Naive thymus-derived CD4-positive, alpha-beta T cell (primary cell): ENCODE measurements at regions of chr11 and their contacts with region 1.

Region 1: GRCh38 chr11:130002846-130003716 is 446 bp upstream of the PRDM10 start:
- DNase-seq: peak; percentile 75 to 97 (median 94)
- ATAC-seq: peak; percentile 85
- H3K4me3 ChIP-seq: peak overlapping the region; percentile 76
- H3K4me3 Mint-ChIP-seq: peak overlapping the region; percentile 87 to 100 (median 99)
- H3K27ac ChIP-seq: peak overlapping the region; percentile 98
- H3K27ac Mint-ChIP-seq: peak overlapping the region; percentile 99 to 100 (median 100)
- H3K4me1 ChIP-seq: peaks cover 16 to 22% of the 10 kb centered on the region in 2 donors
- H3K4me1 Mint-ChIP-seq: peaks cover 21 to 48% (median 43%) of the 10 kb centered on the region in 7 donors
- H3K27me3 ChIP-seq: no peaks in the 10 kb centered on the region
- H3K27me3 Mint-ChIP-seq: peaks cover 0 to 8% (median 0%) of the 10 kb centered on the region in 5 donors

Region 2: GRCh38 chr11:129815596-129816461 is 187.3 kb before region 1 on chr11 and contains the start of gene TMEM45B:
- CTCF ChIA-PET with region 1: no interaction called
- POLR2A ChIA-PET with region 1: interaction called, 6 read pairs
- intact Hi-C with region 1: loop called (anchors 1 to 5 kb)
- DNase-seq: peak; percentile 27 to 57 (median 45)
- ATAC-seq: peak; percentile 38
- H3K4me3 ChIP-seq: peak within 1 kb of the TSS; percentile 54
- H3K4me3 Mint-ChIP-seq: peak within 1 kb of the TSS; percentile 83 to 91 (median 88)
- H3K27ac ChIP-seq: peak within 1 kb of the TSS; percentile 31
- H3K27ac Mint-ChIP-seq: peak within 1 kb of the TSS; percentile 84 to 99 (median 95)
- H3K4me1 ChIP-seq: peaks cover 5 to 9% of the 10 kb centered on the region in 2 donors
- H3K4me1 Mint-ChIP-seq: peaks cover 29 to 79% (median 61%) of the 10 kb centered on the region in 7 donors
- H3K27me3 ChIP-seq: no peaks in the 10 kb centered on the region
- H3K27me3 Mint-ChIP-seq: peaks cover 0 to 75% (median 17%) of the 10 kb centered on the region in 5 donors
- total RNA-seq, gene TMEM45B: 2.3 to 40.8 (median 3.6) TPM

Region 3: DNA sequence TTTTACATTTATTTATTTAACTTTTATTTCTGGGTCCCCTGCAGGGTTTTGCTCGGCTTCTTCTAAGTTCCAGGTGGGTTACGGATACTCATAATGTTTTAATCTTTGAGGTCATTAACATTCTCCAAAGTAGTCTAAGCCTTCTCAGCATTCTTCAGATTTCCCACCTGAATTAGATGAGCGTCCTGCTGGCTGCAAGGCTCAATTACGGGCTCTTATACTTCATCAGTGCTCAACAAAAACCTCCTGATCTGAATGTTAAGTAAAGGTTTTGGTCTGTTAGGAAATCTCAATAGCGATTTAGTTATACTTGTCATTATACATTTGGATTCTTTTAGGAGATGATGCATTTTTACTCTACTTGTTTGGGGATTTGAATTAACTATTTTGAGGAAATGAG is 80.4 kb before region 1 on chr11:
- CTCF ChIA-PET with region 1: interaction called, 5 read pairs
- POLR2A ChIA-PET with region 1: no interaction called
- intact Hi-C with region 1: loop called (anchors 2 kb)
- DNase-seq: peak in 1 of 9 donors; percentile 0
- ATAC-seq: no peak
- H3K4me3 ChIP-seq: no peak overlapping the region
- H3K4me3 Mint-ChIP-seq: peak overlapping the region in 1 of 10 donors; percentile 35
- H3K27ac ChIP-seq: no peak overlapping the region
- H3K27ac Mint-ChIP-seq: peak overlapping the region in 7 of 9 donors; percentile 13 to 58 (median 28)
- H3K4me1 ChIP-seq: peaks cover 0 to 4% of the 10 kb centered on the region in 2 donors
- H3K4me1 Mint-ChIP-seq: peaks cover 6 to 22% (median 18%) of the 10 kb centered on the region in 7 donors
- H3K27me3 ChIP-seq: no peaks in the 10 kb centered on the region
- H3K27me3 Mint-ChIP-seq: no peaks in the 10 kb centered on the region

Region 4: DNA sequence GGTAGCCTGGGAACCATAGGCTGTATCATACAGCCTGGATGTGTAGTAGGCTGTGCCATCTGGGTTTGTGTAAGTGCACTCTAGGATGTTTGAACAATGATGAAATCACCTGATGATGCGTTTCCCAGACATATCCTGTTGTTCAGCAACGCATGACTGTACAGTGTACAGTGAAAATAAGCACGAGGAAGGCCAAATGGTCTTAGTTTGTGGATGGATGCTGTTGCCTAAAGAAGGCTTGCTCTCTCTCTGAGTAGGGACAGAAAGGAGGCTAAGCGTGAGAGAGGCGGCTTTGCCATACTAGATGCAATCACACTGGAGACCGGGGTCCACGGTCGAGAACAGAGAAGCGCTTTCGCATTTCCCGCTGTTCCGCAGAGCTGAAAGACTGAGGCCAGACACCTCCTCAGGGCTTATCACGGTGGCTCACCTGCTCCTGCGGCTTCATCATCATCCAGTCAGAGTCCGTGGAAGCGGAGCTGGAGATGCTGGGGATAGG is 39.1 kb after region 1 on chr11:
- CTCF ChIA-PET with region 1: no interaction called
- POLR2A ChIA-PET with region 1: no interaction called
- intact Hi-C with region 1: no loop called
- DNase-seq: no peak
- ATAC-seq: peak; percentile 91
- H3K4me3 ChIP-seq: no peak overlapping the region
- H3K4me3 Mint-ChIP-seq: no peak overlapping the region
- H3K27ac ChIP-seq: no peak overlapping the region
- H3K27ac Mint-ChIP-seq: no peak overlapping the region
- H3K4me1 ChIP-seq: no peaks in the 10 kb centered on the region
- H3K4me1 Mint-ChIP-seq: peaks cover 0 to 8% (median 0%) of the 10 kb centered on the region in 7 donors
- H3K27me3 ChIP-seq: no peaks in the 10 kb centered on the region
- H3K27me3 Mint-ChIP-seq: peaks cover 9 to 18% (median 12%) of the 10 kb centered on the region in 5 donors

Region 5: GRCh38 chr11:130118636-130119387 is 115.7 kb after region 1 on chr11:
- CTCF ChIA-PET with region 1: no interaction called
- POLR2A ChIA-PET with region 1: interaction called, 11 read pairs
- intact Hi-C with region 1: no loop called
- DNase-seq: peak in 5 of 9 donors; percentile 5 to 36 (median 21)
- ATAC-seq: peak; percentile 75
- H3K4me3 ChIP-seq: no peak overlapping the region
- H3K4me3 Mint-ChIP-seq: peak overlapping the region in 9 of 10 donors; percentile 4 to 72 (median 40)
- H3K27ac ChIP-seq: no peak overlapping the region
- H3K27ac Mint-ChIP-seq: no peak overlapping the region
- H3K4me1 ChIP-seq: peaks cover 14 to 31% of the 10 kb centered on the region in 2 donors
- H3K4me1 Mint-ChIP-seq: peaks cover 25 to 51% (median 43%) of the 10 kb centered on the region in 7 donors
- H3K27me3 ChIP-seq: no peaks in the 10 kb centered on the region
- H3K27me3 Mint-ChIP-seq: peaks cover 0 to 20% (median 0%) of the 10 kb centered on the region in 5 donors

Region 6: DNA sequence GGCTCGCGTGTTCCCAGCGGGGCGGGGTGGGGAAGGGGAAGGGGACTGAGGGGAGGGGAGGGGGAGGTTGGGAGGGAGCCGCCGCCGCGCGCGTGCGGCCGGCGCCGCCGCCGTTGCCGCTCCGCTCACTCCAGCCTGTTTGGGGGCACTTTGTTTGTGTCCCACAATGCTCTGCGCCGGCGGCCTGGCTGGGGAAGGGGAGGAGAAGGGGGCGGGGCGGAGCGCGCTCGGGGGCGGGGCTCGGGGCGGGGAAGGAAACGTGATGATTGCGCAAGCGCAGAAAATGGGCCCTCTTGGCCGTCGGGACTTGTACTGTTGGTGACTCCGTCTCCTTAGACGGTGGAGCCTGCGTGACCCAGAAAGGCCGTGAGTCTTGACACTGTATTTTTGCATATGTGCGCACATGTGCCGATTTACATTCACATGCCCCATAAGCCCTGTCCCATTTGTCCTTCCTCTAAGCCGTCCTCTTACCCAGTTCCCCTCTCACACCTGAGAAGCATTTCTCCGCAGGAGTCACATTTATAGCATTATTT is 311.7 kb after region 1 on chr11 and contains the start of gene ZBTB44:
- CTCF ChIA-PET with region 1: no interaction called
- POLR2A ChIA-PET with region 1: interaction called, 13 read pairs
- intact Hi-C with region 1: loop called (anchors 1 kb)
- DNase-seq: peak; percentile 77 to 91 (median 85)
- ATAC-seq: peak; percentile 94
- H3K4me3 ChIP-seq: peak within 1 kb of the TSS; percentile 68
- H3K4me3 Mint-ChIP-seq: peak within 1 kb of the TSS; percentile 90 to 99 (median 96)
- H3K27ac ChIP-seq: peak within 1 kb of the TSS; percentile 89
- H3K27ac Mint-ChIP-seq: peak within 1 kb of the TSS; percentile 93 to 99 (median 98)
- H3K4me1 ChIP-seq: peaks cover 8 to 16% of the 10 kb centered on the region in 2 donors
- H3K4me1 Mint-ChIP-seq: peaks cover 33 to 54% (median 40%) of the 10 kb centered on the region in 7 donors
- H3K27me3 ChIP-seq: no peaks in the 10 kb centered on the region
- H3K27me3 Mint-ChIP-seq: peaks cover 0 to 6% (median 0%) of the 10 kb centered on the region in 5 donors
- total RNA-seq, gene ZBTB44: 45.3 to 83.4 (median 53.5) TPM